Heart right ventricle (tissue), 16 donors: ENCODE measurements at regions of chr4 and their contacts with region 1.

Region 1: GRCh38 chr4:140109737-140110136 is 44.2 kb downstream of the MAML3 start:
- DNase-seq: no peak
- ATAC-seq: no peak
- H3K4me3 ChIP-seq: no peak overlapping the region
- H3K27ac ChIP-seq: no peak overlapping the region
- H3K4me1 ChIP-seq: peaks cover 0 to 13% (median 0%) of the 10 kb centered on the region in 9 donors
- H3K27me3 ChIP-seq: no peaks in the 10 kb centered on the region
- CTCF ChIP-seq: no peak

Region 2: DNA sequence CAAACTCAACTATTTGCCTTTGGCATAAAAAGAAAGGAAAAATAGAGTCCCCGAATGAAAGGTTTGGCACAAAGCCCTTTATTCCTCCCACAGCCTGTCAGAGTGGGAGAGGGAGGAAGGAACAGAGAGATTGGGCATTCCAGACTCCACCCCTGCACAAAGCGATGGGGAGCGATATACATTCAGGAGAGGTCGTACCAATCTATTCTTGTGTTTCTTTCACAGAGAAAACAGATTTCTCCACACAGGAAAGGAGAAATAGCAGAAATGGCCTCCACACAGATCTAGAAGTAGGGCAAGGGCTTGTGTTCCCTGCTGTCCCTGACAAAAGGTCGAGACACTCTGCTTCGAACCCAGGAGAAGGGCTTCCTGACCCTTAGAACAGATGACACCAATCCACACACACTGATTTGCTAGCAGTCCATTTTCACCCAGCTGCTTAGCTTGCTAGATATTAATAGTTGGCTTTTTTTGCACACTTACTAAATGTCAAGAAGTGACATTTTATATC is 153.2 kb before region 1 on chr4:
- intact Hi-C with region 1: no loop called
- DNase-seq: peak in 1 of 2 donors; percentile 34
- ATAC-seq: peak in 7 of 8 donors; percentile 34 to 73 (median 67)
- H3K4me3 ChIP-seq: peak overlapping the region in 5 of 10 donors; percentile 3 to 32 (median 24)
- H3K27ac ChIP-seq: peak overlapping the region in 3 of 10 donors; percentile 1 to 29 (median 6)
- H3K4me1 ChIP-seq: peaks cover 0 to 29% (median 17%) of the 10 kb centered on the region in 9 donors
- H3K27me3 ChIP-seq: no peaks in the 10 kb centered on the region
- CTCF ChIP-seq: no peak

Region 3: DNA sequence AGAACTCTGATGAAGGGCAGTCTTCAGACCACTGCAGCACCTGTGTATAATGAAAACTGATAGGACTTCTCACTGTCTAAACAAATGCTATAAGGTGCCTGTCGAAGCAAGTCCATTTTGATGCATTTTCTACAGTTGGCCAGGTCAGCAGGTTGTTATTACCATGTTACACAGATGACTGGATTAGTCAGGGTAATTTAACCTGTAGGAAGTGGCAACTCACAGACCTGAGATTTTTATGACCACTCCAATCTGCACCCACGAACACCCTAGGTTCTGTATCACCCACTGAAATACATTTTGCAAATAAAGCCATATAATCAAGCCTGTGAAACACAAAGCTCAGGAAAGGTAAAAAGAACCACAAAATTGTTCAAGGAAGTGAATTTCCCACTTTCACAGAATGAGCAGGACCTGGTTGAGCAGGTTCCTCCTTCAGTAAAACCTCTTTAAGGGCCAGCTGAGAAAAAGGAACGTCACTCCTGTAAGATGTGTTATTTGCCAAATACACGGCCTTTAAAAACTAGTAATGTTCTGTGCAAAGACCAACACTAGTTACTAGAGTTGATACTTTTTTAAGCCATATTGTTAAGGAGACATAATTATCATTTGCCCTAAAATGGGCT is 31.6 kb after region 1 on chr4:
- intact Hi-C with region 1: loop called in 2 of 10 experiments (anchors 5 kb)
- DNase-seq: no peak
- ATAC-seq: no peak
- H3K4me3 ChIP-seq: no peak overlapping the region
- H3K27ac ChIP-seq: no peak overlapping the region
- H3K4me1 ChIP-seq: peaks cover 0 to 10% (median 0%) of the 10 kb centered on the region in 9 donors
- H3K27me3 ChIP-seq: no peaks in the 10 kb centered on the region
- CTCF ChIP-seq: no peak